ENCODE measurements at regions of chr14 and their contacts with region 1.

Region 1: DNA sequence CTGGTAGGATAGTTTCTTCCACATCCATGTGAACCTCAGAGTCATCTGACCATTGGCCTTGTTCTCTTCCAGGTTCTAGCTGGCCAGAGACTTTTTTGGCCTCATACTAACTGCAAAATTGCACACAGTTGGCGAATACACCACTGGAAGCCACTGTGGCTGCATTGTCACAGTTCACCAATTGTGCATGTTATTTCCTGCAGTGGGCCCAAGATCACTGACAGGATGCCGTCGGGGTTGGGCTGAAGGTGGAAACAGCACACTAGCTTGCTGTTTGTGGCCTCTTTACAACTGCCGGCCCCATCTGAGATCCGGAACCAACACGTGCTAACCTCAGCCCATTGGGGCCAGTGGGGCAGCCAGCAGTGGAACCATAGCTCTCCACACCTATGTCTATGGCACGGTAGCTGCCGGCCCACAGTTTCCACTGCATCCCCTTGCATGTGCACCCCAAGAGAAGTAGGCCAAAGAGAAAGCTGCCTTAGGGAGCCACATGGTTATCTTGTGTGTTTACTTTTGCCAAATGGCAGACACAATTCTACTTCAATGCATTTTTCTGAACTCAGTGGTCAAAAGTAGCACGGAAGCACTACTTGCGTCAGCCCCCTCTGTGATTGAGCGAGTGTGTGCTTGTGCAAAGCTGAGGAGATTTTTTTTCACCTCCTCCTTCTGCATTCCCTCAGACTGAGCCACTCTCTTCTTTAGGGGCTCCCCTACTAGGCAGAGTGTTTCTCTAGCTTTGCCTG is 464.0 kb downstream of the RAD51B start:
- DNase-seq: peak; percentile 96
- H3K4me3 ChIP-seq: peak overlapping the region; percentile 54
- H3K27ac ChIP-seq: peak overlapping the region; percentile 92
- H3K4me1 ChIP-seq: peaks cover 98% of the 10 kb centered on the region
- CTCF ChIP-seq: 0 out of 2 replicates have a peak, but pooled peaks have one; percentile 29

Region 2: GRCh38 chr14:68297876-68298469 is 14.4 kb after region 1 on chr14:
- CTCF ChIA-PET with region 1: interaction called, 3 read pairs
- POLR2A ChIA-PET with region 1: interaction called, 58 read pairs
- intact Hi-C with region 1: no loop called
- DNase-seq: no peak
- H3K4me3 ChIP-seq: no peak overlapping the region
- H3K27ac ChIP-seq: no peak overlapping the region
- H3K4me1 ChIP-seq: peaks cover 44% of the 10 kb centered on the region
- CTCF ChIP-seq: no peak; the same call in 1 of the 2 replicates

Region 3: GRCh38 chr14:68369281-68370056 is 85.9 kb after region 1 on chr14:
- CTCF ChIA-PET with region 1: interaction called, 4 read pairs
- POLR2A ChIA-PET with region 1: interaction called, 5 read pairs
- intact Hi-C with region 1: loop called (anchors 2 kb)
- DNase-seq: no peak
- H3K4me3 ChIP-seq: peak overlapping the region; percentile 13
- H3K27ac ChIP-seq: peak overlapping the region; percentile 34
- H3K4me1 ChIP-seq: peaks cover 98% of the 10 kb centered on the region
- CTCF ChIP-seq: no peak

Region 4: DNA sequence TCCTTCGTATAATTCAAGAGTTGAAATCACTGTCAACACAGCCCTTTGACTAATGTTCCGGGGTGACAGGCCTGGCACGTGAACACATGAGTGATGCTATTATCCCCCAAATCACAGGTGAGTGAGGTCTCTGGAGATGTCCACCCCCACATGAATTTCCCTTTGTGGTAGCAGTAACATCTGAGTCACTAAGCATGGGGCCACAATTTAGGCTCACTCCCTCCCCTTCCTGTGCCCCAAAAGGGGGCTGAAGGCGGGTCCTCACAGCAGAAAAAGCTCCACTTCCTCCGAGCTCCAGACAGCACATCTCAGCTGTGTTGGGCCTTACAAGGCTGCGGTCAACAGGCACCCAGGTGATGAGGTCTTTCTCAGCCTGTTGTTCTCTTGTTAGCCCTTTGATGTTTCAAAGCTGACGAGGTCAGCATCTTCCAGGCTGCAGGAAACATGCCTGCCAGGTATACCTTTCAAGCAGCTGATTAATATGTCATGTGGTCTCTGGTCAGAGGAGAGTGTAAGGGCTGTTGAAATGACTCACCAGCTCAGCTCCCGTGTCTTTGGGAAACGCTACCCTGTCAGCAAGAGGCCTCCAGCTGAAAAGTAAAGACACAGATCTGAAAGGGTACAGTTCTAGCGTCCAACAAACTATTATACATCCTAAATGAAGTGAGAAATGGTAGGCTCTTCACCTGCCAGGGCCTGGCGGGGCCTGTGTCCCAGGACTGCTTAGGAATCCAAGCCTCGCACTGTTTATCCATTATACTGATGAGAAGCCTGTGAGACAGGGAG is 402.1 kb after region 1 on chr14:
- CTCF ChIA-PET with region 1: interaction called, 3 read pairs
- POLR2A ChIA-PET with region 1: no interaction called
- intact Hi-C with region 1: loop called (anchors 1 kb)
- DNase-seq: peak; percentile 98
- H3K4me3 ChIP-seq: peak overlapping the region; percentile 57
- H3K27ac ChIP-seq: peak overlapping the region; percentile 97
- H3K4me1 ChIP-seq: peaks cover 98% of the 10 kb centered on the region
- CTCF ChIP-seq: no peak

Region 5: DNA sequence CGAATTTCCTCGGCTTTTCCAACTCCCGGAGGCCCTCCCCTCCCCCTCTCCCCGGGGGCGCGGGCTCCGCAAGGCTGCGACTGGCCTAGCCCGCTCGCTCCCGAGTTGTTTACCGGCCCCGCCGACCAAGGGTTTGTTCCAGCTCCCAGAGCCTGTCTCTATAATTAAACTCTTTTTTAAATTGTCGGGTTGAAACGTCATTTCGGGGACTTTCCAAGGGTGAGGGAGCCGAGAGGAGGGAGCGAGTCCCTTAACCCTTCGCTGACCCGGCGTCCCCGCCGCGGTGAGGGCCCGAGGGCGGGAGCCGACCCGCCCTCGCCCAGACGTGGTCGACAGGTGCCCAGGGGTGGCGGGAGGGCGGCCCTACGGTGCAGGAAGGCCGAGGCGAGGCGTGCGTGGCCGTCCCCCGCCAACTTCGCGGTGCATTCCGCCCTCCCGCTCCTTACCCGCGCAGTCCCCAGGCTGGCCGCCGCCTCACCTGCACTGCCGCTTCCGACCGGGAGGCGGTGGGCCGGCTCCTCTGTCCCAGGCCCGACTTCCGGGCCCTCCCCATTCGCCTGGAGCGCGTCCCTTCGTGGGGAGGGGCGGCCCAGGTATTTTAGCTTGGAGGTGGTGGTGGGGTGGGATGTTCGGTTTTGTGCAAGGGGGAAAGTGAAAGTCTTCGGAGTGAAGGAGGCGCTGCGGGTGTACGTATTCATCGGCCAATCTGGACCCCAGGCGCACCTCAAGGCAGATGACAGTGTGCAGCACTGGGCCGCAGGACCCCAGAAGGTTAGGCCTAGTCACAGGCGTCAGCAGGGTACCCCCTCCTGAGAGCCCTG is 512.3 kb after region 1 on chr14:
- CTCF ChIA-PET with region 1: no interaction called
- POLR2A ChIA-PET with region 1: interaction called, 11 read pairs
- intact Hi-C with region 1: no loop called
- DNase-seq: peak; percentile 90
- H3K4me3 ChIP-seq: peak overlapping the region; percentile 87
- H3K27ac ChIP-seq: peak overlapping the region; percentile 92
- H3K4me1 ChIP-seq: peaks cover 39% of the 10 kb centered on the region
- CTCF ChIP-seq: peak; percentile 71